ENCODE measurements at regions of chr17 and their contacts with region 1.

Region 1: DNA sequence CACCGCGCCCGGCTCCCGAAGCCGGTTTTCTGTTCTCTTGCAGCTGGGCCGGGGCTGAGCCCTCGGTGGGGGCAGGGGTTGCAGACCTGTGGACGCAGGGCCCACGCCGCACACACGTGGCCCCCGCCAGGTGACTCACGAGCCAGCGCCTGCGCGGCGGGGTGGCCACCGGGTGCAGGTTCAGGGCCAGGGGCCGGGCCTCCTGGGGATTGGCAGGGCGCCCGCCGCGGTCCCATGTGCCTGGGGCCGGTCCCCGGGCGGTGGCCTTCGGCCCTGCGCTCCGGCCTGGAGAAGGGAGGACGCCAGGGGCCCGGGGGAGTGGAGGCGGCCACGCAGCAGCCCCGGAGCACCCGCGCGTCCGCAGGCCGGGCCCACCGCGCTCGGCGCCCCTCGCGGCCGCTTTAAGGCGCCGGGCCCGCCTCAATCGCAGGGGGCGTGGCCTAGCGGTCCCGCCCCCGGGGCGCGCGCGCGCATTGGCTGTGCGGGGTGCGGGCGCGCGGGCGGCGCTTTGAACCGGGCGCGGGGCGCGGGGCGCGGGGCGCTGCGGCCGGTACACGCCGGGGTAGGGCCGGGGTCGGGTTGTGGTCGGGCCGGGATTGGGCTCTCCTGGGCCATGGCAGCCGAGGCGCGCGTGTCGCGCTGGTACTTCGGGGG is at the start of gene SLC25A10:
- DNase-seq: peak; percentile 90
- H3K4me3 ChIP-seq: peak within 1 kb of the TSS; percentile 85
- H3K27ac ChIP-seq: peak within 1 kb of the TSS; percentile 84
- H3K4me1 ChIP-seq: peaks cover 19% of the 10 kb centered on the region
- H3K27me3 ChIP-seq: no peaks in the 10 kb centered on the region
- CTCF ChIP-seq: no peak
- total RNA-seq, gene SLC25A10: 46.8 and 56.2 TPM in 2 replicates

Region 2: DNA sequence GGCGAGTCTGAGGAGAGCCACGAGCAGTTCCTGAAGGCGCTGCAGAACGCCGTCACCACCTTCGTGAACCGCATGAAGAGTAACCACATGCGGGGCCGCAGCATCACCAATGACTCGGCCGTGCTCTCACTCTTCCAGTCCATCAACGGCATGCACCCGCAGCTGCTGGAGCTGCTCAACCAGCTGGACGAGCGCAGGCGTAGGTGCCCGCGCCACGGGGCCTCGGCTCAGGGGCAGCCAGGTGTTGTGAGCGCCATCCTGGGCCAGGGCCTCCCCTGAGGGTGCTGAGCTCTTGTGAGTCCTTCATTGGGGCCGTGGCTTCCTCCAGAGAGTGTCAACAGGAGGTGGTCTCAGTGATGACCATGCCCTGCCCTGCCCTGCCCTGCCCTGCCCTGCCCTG is 16.1 kb before region 1 on chr17:
- CTCF ChIA-PET with region 1: no interaction called
- POLR2A ChIA-PET with region 1: interaction called, 10 read pairs
- intact Hi-C with region 1: no loop called
- DNase-seq: no peak
- H3K4me3 ChIP-seq: no peak overlapping the region
- H3K27ac ChIP-seq: no peak overlapping the region
- H3K4me1 ChIP-seq: peaks cover 1% of the 10 kb centered on the region
- H3K27me3 ChIP-seq: no peaks in the 10 kb centered on the region
- CTCF ChIP-seq: no peak